Right ventricle myocardium superior (tissue), 1 donor: ENCODE measurements at regions of chr11 and their contacts with region 1.

Region 1: GRCh38 chr11:62394825-62395538 is 23.9 kb upstream of the SCGB1A1 start:
- DNase-seq: peak; percentile 90
- ATAC-seq: peak; percentile 90

Region 2: DNA sequence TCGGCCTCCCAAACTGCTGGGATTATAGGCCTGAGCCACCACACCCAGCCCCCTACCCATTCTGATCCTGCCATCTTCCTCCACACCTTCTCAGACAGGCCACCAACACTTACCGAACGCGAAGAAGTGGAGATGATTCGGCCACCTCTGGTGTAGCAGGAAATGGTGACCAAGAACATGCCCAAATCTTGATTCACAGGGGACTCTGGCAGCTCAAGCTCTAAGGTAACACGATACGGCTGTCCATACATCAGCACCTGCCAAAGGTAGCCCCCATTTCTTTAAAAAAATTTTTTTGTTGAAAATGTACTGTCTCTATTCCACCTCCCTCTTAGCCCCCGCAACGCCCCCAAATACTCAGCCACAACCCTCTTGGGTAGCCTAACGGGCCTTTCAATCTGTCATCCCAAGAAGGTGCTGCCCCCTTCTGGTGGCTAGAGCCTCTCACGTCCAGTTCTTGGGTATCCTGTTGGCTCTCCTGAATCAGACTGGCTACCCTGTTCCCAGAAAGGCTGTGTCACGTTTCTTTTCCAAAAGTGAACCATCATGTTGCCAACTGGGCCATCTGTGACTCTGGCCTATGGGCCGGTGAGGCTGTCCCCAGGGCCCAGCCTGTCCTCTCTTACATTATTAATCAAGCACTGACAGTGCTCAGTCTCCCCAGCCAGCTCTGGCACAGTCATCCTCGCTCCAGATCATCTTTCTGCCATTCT is 299.6 kb after region 1 on chr11:
- intact Hi-C with region 1: loop called (anchors 10 kb)
- DNase-seq: peak; percentile 86
- ATAC-seq: peak; percentile 83